Mucosa of descending colon (tissue), 3 donors: ENCODE measurements at regions of chr5 and their contacts with region 1.

Region 1: GRCh38 chr5:65481635-65482295 is at the start of gene ADAMTS6:
- DNase-seq: peak; percentile 78 to 86 (median 86)
- ATAC-seq: peak; percentile 86
- H3K4me3 ChIP-seq: peak within 1 kb of the TSS; percentile 2
- H3K4me1 ChIP-seq: peaks cover 17% of the 10 kb centered on the region
- CTCF ChIP-seq: no peak
- total RNA-seq, gene ADAMTS6: 0.69 to 3.6 (median 1.4) TPM

Region 2: GRCh38 chr5:64634997-64635686 is 846.6 kb before region 1 on chr5:
- intact Hi-C with region 1: loop called in 1 of 2 experiments (anchors 10 kb)
- DNase-seq: no peak
- ATAC-seq: peak; percentile 46
- H3K4me3 ChIP-seq: no peak overlapping the region
- H3K4me1 ChIP-seq: no peaks in the 10 kb centered on the region
- CTCF ChIP-seq: peak; percentile 46

Region 3: GRCh38 chr5:64811050-64811640 is 670.6 kb before region 1 on chr5:
- intact Hi-C with region 1: loop called (anchors 2 to 5 kb)
- DNase-seq: peak in 1 of 3 donors; percentile 32
- ATAC-seq: no peak
- H3K4me3 ChIP-seq: no peak overlapping the region
- H3K4me1 ChIP-seq: no peaks in the 10 kb centered on the region
- CTCF ChIP-seq: no peak

Region 4: GRCh38 chr5:64958757-64959391 is 522.9 kb before region 1 on chr5:
- intact Hi-C with region 1: loop called in 1 of 2 experiments (anchors 10 kb)
- DNase-seq: peak in 1 of 3 donors; percentile 10
- ATAC-seq: no peak
- H3K4me3 ChIP-seq: no peak overlapping the region
- H3K4me1 ChIP-seq: no peaks in the 10 kb centered on the region
- CTCF ChIP-seq: no peak

Region 5: DNA sequence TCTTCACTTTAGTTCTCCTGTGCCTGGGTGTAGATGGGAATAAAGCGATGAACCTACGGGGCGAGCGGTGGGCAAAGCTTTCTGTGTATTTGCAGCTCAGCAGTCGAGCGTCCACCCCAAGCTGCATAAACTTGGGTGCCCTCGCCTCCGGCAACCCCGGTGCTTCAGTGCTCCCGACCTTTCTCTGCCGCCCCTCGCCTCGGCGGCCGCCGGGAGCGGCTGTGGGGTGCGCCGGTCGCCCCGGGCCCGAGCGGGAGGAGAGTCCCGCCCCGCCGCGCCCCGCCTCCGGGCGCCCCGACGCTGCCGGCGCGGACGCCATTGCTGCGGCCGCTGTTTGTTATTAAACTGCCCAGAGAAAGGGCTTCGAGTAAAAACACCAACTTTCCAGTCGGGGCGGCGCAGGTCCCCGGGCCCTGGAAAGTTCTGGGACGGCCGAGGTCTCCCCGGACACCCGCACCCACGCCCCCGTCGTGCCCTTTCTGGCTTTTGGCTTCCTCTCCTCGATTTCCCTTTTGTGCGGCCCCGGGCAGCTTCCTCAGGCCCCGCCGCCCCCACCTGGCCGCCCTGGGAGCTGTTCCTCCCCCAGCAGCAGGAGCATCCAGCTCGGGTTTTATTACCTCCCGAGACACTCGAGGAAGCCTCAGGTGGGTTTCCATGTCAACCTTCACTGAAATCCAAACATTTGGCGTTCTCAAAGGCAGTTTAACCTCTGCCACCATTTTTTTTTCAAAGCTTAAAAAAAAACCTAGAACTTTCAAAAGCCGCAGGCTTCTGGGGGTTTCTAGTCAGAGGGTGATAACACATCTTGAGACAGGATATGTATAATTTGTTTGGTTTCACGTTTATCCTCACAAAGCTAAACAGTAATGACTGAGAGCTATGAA is 378.7 kb before region 1 on chr5:
- intact Hi-C with region 1: loop called in 1 of 2 experiments (anchors 2 kb)
- DNase-seq: peak; percentile 65 to 75 (median 67)
- ATAC-seq: peak; percentile 85
- H3K4me3 ChIP-seq: peak overlapping the region; percentile 28
- H3K4me1 ChIP-seq: peaks cover 6% of the 10 kb centered on the region
- CTCF ChIP-seq: no peak

Region 6: DNA sequence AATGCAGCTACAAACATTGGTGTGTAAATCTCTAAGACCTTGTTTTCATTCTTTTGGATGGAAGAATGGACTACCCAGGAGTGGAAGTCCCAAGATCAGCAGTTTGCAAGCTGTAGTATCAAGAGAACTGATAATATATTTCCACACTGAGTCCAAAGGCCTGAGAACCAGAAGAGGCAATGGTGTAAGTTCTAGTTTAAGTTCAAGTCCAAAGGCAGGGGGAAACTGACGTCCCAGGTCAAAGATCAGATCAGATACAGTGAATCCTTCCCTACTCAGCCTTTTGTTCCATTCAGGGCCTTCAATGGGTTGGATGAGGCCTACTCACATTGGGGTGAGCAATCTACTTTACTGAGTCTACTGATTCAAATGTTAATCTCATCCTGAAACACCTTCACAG is 364.3 kb after region 1 on chr5:
- intact Hi-C with region 1: no loop called
- DNase-seq: no peak
- ATAC-seq: no peak
- H3K4me3 ChIP-seq: no peak overlapping the region
- H3K4me1 ChIP-seq: no peaks in the 10 kb centered on the region
- CTCF ChIP-seq: no peak